Activated T-helper 2 cell treated with anti-CD3 and anti-CD28 coated beads, Interferon-gamma antibody, Interleukin-2, Interleukin-4, amounts not matched to agents 10 μg/mL and 5 μg/mL and 100 μg/mL, durations not matched to agents 14 hours and 24 hours and 36 hours (primary cell): ENCODE measurements at regions of chr5 and their contacts with region 1.

Region 1: DNA sequence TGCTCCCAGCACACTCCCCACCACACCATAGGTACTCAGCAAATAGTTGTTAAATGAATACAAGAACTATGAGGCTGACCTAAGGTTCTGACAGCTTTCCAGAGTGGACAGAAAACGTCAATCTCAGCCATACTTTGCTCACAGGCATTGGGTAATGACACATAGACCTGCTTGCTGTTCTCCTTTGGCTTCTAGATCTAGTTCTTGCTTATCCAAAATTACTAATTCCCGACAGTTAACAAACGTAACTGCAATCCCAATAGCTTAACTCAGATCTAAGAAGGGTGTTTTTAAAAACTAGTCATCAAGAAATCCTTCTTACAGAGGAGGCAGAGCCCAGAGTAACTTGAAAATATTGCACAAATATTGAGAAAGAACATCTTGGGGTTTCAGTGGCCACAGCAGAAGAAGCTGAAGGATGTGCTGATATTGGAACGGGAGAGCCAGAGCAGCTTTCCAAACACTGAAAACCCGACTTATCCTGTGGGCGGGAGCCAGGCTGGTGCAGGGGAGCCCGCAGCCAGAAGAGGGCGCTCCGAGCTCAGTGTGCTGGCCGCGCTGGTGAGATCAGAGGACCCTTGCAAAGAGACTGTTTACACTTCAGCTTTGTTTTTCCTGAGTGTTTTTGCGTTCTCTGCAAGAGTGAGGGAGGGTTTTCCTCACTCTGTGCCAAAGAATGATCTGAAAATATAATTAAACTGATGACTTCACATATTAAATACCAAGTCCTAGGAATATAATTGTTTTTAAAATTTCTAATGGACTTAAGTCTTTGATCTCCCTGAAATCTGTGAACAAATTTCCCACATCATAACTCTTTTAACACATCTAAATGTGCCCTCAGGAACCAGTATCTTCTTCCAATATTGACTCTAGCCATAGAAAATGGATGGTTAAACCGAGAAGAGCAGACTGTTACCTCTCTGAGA is 30.3 kb downstream of the FGF1 start:
- DNase-seq: peak; percentile 50
- H3K4me3 Mint-ChIP-seq: no peak overlapping the region
- H3K27ac Mint-ChIP-seq: no peak overlapping the region
- H3K4me1 Mint-ChIP-seq: peaks cover 2% of the 10 kb centered on the region
- H3K27me3 Mint-ChIP-seq: peaks cover 23% of the 10 kb centered on the region

Region 2: GRCh38 chr5:141608557-141608956 is 1047.0 kb before region 1 on chr5:
- intact Hi-C with region 1: no loop called
- DNase-seq: no peak
- H3K4me3 Mint-ChIP-seq: peak overlapping the region; percentile 5
- H3K27ac Mint-ChIP-seq: peak overlapping the region; percentile 81
- H3K4me1 Mint-ChIP-seq: peaks cover 75% of the 10 kb centered on the region
- H3K27me3 Mint-ChIP-seq: no peaks in the 10 kb centered on the region

Region 3: DNA sequence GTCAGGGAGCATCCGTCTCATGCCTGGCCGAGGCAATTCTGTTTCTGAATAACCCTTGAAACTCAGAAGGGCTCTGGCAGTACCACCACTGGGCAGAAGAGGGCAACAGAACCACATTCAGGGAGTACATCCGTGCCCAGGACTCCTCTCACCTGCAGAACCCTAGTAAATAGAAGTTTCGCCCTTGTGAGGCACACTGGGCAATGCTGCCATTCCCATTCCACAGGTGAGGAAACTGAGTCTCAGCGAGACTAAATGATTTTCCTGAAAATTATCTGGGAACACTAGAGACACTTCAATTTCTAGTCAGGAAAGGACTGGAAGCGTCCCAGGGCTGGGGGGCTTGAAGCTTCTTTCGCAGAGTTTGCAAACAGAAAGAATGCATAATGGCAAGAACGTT is 44.4 kb before region 1 on chr5:
- intact Hi-C with region 1: loop called (anchors 5 kb)
- DNase-seq: peak; percentile 42
- H3K4me3 Mint-ChIP-seq: no peak overlapping the region
- H3K27ac Mint-ChIP-seq: no peak overlapping the region
- H3K4me1 Mint-ChIP-seq: no peaks in the 10 kb centered on the region
- H3K27me3 Mint-ChIP-seq: peaks cover 24% of the 10 kb centered on the region

Region 4: DNA sequence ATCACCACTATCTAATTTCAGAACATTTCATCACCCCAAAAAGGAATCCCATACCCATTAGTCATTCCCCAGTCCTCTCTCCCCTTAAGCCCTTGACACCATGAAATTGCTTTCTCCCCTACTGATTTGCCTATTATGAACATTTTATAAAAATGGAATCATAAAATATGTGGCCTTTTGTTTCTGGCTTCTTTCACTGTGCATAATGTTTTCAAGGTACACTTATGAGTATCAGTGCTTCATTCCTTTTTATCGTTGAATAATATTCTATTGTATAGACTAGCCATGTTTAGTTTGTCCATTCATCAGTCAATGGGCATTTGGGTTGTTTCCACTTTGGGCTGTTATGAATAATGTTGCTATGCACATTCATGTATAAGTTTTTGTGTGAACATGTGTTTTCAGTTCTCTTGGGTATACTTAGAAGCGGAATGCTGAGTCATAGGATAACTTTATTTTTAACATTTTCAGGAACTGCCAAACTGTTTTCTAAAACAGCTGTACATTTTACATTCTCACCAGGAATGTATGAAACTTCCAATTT is 70.7 kb after region 1 on chr5:
- intact Hi-C with region 1: no loop called
- DNase-seq: no peak
- H3K4me3 Mint-ChIP-seq: no peak overlapping the region
- H3K27ac Mint-ChIP-seq: no peak overlapping the region
- H3K4me1 Mint-ChIP-seq: peaks cover 2% of the 10 kb centered on the region
- H3K27me3 Mint-ChIP-seq: peaks cover 5% of the 10 kb centered on the region